Endothelial cell of umbilical vein (primary cell): ENCODE measurements at regions of chr1 and their contacts with region 1.

Region 1: GRCh38 chr1:10507111-10507879 is 32.5 kb downstream of the PEX14 start:
- DNase-seq: peak; percentile 49
- H3K4me3 ChIP-seq: no peak overlapping the region
- H3K27ac ChIP-seq: no peak overlapping the region
- H3K4me1 ChIP-seq: peaks cover 28% of the 10 kb centered on the region
- H3K27me3 ChIP-seq: no peaks in the 10 kb centered on the region
- CTCF ChIP-seq: peak; percentile 83 to 88
- POLR2A ChIP-seq: no peak

Region 2: DNA sequence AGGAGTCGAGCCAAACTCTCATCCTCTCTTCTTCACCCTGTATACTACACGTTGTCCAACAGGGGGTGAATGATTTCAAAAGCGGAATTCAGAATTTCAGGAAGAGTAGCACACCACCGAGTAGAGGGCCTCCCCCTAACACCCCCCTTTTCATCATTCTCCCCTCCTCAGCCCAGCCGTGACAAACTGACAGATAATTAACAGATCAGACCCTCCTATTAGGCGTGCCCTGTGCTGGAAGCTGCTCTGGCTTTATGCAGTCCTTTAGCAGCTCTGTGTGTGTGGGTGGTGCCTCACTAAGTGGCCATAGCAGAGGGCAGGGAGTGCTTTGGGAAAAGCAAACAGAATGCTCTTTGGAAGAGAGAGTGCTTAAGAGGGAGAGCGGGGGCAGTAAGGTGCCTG is 11.7 kb after region 1 on chr1:
- CTCF ChIA-PET with region 1: interaction called, 21 read pairs
- POLR2A ChIA-PET with region 1: interaction called, 3 read pairs
- dilution Hi-C with region 1: no loop called
- intact Hi-C with region 1: no loop called
- DNase-seq: no peak
- H3K4me3 ChIP-seq: no peak overlapping the region
- H3K27ac ChIP-seq: no peak overlapping the region
- H3K4me1 ChIP-seq: peaks cover 3% of the 10 kb centered on the region
- H3K27me3 ChIP-seq: no peaks in the 10 kb centered on the region
- CTCF ChIP-seq: no peak
- POLR2A ChIP-seq: no peak

Region 3: GRCh38 chr1:10635085-10635896 is 128.0 kb after region 1 on chr1:
- CTCF ChIA-PET with region 1: interaction called, 5 read pairs
- POLR2A ChIA-PET with region 1: no interaction called
- dilution Hi-C with region 1: no loop called
- intact Hi-C with region 1: loop called (anchors 5 kb)
- DNase-seq: no peak
- H3K4me3 ChIP-seq: no peak overlapping the region
- H3K27ac ChIP-seq: no peak overlapping the region
- H3K4me1 ChIP-seq: peaks cover 7% of the 10 kb centered on the region
- H3K27me3 ChIP-seq: peaks cover 0 to 9% of the 10 kb centered on the region in 2 experiments
- CTCF ChIP-seq: no peak
- POLR2A ChIP-seq: no peak

Region 4: GRCh38 chr1:10796019-10796944 is 289.0 kb after region 1 on chr1 and contains the start of gene CASZ1:
- CTCF ChIA-PET with region 1: interaction called, 4 read pairs
- POLR2A ChIA-PET with region 1: no interaction called
- dilution Hi-C with region 1: no loop called
- intact Hi-C with region 1: loop called (anchors 1 kb)
- DNase-seq: peak; percentile 83
- H3K4me3 ChIP-seq: peak within 1 kb of the TSS; percentile 48 to 68 (median 56)
- H3K27ac ChIP-seq: no peak within 1 kb of the TSS
- H3K4me1 ChIP-seq: peaks cover 14% of the 10 kb centered on the region
- H3K27me3 ChIP-seq: peaks cover 39 to 58% of the 10 kb centered on the region in 2 experiments
- CTCF ChIP-seq: no peak
- POLR2A ChIP-seq: no peak
- total RNA-seq, gene CASZ1: 5.1 and 5.2 TPM in 2 replicates

Region 5: GRCh38 chr1:10867138-10867721 is 359.9 kb after region 1 on chr1:
- CTCF ChIA-PET with region 1: interaction called, 132 read pairs
- POLR2A ChIA-PET with region 1: no interaction called
- dilution Hi-C with region 1: no loop called
- intact Hi-C with region 1: loop called (anchors 1 kb)
- DNase-seq: peak; percentile 22
- H3K4me3 ChIP-seq: peak overlapping the region in 1 of 3 experiments; percentile 22
- H3K27ac ChIP-seq: no peak overlapping the region
- H3K4me1 ChIP-seq: no peaks in the 10 kb centered on the region
- H3K27me3 ChIP-seq: peaks cover 9 to 11% of the 10 kb centered on the region in 2 experiments
- CTCF ChIP-seq: peak; percentile 48 to 77
- POLR2A ChIP-seq: no peak

Region 6: DNA sequence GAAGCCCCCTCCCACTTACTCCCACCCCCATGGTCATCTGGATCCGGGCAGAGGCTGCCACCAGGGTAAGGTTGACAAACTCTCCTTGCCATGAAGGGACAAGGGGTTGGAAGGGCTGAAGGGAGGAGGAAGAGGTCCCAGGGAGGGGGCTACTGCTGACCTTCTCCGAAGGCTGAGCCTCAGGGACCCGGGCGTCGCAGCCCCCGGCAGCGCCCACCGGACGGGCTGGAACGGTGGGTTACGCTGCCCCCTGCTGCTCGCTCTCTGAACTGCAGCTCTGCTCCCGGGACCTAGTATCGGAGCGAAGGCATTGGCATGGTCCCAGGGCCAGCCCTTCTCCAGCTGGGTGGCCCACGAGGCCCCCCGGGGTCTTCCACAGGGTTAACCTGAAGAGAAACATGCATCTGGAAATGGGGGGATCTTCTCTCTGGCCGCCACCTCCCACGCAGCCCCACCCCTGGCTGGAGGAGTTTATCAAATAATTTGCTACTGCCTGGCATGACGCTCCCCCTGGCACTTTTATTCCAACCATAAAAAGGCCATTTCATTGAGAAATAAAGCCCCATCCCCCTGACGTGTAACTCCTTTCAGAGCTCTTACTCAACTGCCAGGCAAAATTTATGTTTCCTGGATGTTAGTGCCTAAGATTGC is 434.7 kb after region 1 on chr1:
- CTCF ChIA-PET with region 1: interaction called, 15 read pairs
- POLR2A ChIA-PET with region 1: no interaction called
- dilution Hi-C with region 1: no loop called
- intact Hi-C with region 1: loop called (anchors 1 kb)
- DNase-seq: peak; percentile 22
- H3K4me3 ChIP-seq: no peak overlapping the region
- H3K27ac ChIP-seq: no peak overlapping the region
- H3K4me1 ChIP-seq: no peaks in the 10 kb centered on the region
- H3K27me3 ChIP-seq: peaks cover 8 to 9% of the 10 kb centered on the region in 2 experiments
- CTCF ChIP-seq: peak; percentile 91 to 98
- POLR2A ChIP-seq: no peak

Region 7: DNA sequence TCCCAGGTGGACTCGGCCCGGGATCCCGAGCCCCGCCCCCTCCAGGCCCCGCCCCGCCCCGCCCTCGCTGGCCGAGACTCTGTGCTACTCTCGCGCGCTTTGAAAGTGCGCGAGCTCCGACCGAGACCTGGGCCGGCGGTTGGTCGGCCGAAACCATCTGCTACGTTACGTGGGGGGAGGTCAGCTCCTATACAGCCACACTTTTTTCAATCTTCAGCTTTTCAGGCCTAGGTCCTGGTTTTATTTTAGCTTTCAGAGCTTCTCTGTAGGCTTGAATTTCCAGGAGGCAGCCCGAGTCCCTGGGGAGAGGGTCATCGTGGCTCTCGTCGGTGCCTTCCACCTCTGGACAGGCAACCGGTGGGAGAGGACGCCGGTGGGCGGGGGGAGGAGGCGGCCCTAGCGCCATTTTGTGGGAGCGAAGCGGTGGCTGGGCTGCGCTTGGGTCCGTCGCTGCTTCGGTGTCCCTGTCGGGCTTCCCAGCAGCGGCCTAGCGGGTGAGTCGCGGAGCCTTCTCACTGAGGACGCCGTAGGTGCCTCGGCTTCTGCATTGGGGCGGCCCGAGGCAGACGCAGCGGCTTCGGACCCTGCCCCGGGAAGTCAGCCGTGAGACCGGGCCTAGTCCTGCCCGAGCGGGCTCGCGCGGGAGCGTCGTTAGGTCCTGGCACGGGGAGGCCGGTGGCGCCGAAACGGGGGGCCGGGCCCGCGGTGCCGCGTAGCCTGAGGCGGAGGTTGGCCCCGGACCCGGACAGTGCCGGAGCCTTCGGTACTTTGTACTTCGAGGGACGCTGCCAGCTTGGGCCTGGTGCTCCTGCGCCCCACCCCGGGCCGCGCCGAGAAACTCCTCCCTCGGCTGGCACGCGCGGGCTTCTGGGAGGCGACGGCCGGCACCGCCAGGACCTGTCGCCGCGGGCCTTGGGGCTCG is 505.2 kb after region 1 on chr1 and contains the start of gene TARDBP:
- CTCF ChIA-PET with region 1: no interaction called
- POLR2A ChIA-PET with region 1: no interaction called
- dilution Hi-C with region 1: no loop called
- intact Hi-C with region 1: loop called (anchors 2 kb)
- DNase-seq: peak; percentile 91
- H3K4me3 ChIP-seq: peak within 1 kb of the TSS; percentile 62 to 95 (median 95)
- H3K27ac ChIP-seq: peak within 1 kb of the TSS; percentile 100
- H3K4me1 ChIP-seq: peaks cover 20% of the 10 kb centered on the region
- H3K27me3 ChIP-seq: no peaks in the 10 kb centered on the region
- CTCF ChIP-seq: no peak
- POLR2A ChIP-seq: peak; percentile 83
- total RNA-seq, gene TARDBP: 171 and 183 TPM in 2 replicates